Mammary epithelial cell (primary cell): ENCODE measurements at regions of chr5 and their contacts with region 1.

Region 1: GRCh38 chr5:116574367-116575325 is at the start of gene SEMA6A:
- DNase-seq: peak; percentile 95
- H3K4me3 ChIP-seq: peak within 1 kb of the TSS; percentile 41 to 71 (median 53)
- H3K27ac ChIP-seq: peak within 1 kb of the TSS; percentile 35
- H3K4me1 ChIP-seq: peaks cover 32% of the 10 kb centered on the region
- H3K27me3 ChIP-seq: peaks cover 23% of the 10 kb centered on the region
- CTCF ChIP-seq: peak in 1 of 2 donors; percentile 20
- total RNA-seq, gene SEMA6A: 1.2 to 7.7 TPM

Region 2: GRCh38 chr5:116137544-116138378 is 436.9 kb before region 1 on chr5:
- CTCF ChIA-PET with region 1: no interaction called
- dilution Hi-C with region 1: no loop called
- in situ Hi-C with region 1: loop called in 1 of 2 experiments (anchors 25 kb)
- intact Hi-C with region 1: loop called (anchors 5 kb)
- DNase-seq: peak; percentile 27
- H3K4me3 ChIP-seq: no peak overlapping the region
- H3K27ac ChIP-seq: no peak overlapping the region
- H3K4me1 ChIP-seq: no peaks in the 10 kb centered on the region
- H3K27me3 ChIP-seq: no peaks in the 10 kb centered on the region
- CTCF ChIP-seq: peak; percentile 70 to 79

Region 3: DNA sequence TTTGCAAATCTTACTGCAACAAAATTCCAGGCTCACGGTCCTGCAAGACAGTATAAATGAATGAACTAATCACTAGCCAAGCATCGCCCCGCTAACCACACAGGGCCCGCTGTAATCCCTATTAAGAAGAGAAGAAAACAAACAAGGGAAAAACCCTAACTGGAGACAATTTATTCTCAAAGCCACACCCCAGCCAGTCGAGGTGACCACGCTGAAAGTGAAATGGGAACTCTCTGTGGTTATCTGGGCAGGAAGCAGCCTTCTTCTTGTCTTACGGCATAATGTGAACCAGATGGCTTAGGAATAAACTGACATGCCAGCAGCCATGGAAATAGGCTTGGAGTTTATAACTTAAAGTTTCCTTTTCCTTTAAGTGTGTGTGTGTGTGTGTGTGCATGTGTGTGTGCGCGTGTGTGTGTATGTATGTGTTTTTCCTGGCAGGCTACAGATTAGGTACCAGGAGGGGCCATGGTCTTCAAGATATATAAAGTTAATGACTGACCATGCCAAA is 120.2 kb before region 1 on chr5:
- CTCF ChIA-PET with region 1: no interaction called
- dilution Hi-C with region 1: no loop called
- in situ Hi-C with region 1: no loop called
- intact Hi-C with region 1: no loop called
- DNase-seq: peak; percentile 30
- H3K4me3 ChIP-seq: no peak overlapping the region
- H3K27ac ChIP-seq: no peak overlapping the region
- H3K4me1 ChIP-seq: peaks cover 13% of the 10 kb centered on the region
- H3K27me3 ChIP-seq: no peaks in the 10 kb centered on the region
- CTCF ChIP-seq: no peak

Region 4: GRCh38 chr5:116510517-116510916 is 64.1 kb before region 1 on chr5:
- CTCF ChIA-PET with region 1: no interaction called
- dilution Hi-C with region 1: no loop called
- in situ Hi-C with region 1: no loop called
- intact Hi-C with region 1: no loop called
- DNase-seq: no peak
- H3K4me3 ChIP-seq: no peak overlapping the region
- H3K27ac ChIP-seq: no peak overlapping the region
- H3K4me1 ChIP-seq: no peaks in the 10 kb centered on the region
- H3K27me3 ChIP-seq: no peaks in the 10 kb centered on the region
- CTCF ChIP-seq: no peak

Region 5: GRCh38 chr5:116658141-116658749 is 83.6 kb after region 1 on chr5:
- CTCF ChIA-PET with region 1: no interaction called
- dilution Hi-C with region 1: no loop called
- in situ Hi-C with region 1: no loop called
- intact Hi-C with region 1: loop called (anchors 5 kb)
- DNase-seq: peak; percentile 73
- H3K4me3 ChIP-seq: no peak overlapping the region
- H3K27ac ChIP-seq: no peak overlapping the region
- H3K4me1 ChIP-seq: peaks cover 8% of the 10 kb centered on the region
- H3K27me3 ChIP-seq: no peaks in the 10 kb centered on the region
- CTCF ChIP-seq: no peak

Region 6: GRCh38 chr5:116771466-116772151 is 197.0 kb after region 1 on chr5:
- CTCF ChIA-PET with region 1: no interaction called
- dilution Hi-C with region 1: no loop called
- in situ Hi-C with region 1: no loop called
- intact Hi-C with region 1: loop called (anchors 5 kb)
- DNase-seq: peak; percentile 88
- H3K4me3 ChIP-seq: peak overlapping the region in 1 of 3 experiments; percentile 19
- H3K27ac ChIP-seq: peak overlapping the region; percentile 80
- H3K4me1 ChIP-seq: peaks cover 14% of the 10 kb centered on the region
- H3K27me3 ChIP-seq: no peaks in the 10 kb centered on the region
- CTCF ChIP-seq: no peak

Region 7: DNA sequence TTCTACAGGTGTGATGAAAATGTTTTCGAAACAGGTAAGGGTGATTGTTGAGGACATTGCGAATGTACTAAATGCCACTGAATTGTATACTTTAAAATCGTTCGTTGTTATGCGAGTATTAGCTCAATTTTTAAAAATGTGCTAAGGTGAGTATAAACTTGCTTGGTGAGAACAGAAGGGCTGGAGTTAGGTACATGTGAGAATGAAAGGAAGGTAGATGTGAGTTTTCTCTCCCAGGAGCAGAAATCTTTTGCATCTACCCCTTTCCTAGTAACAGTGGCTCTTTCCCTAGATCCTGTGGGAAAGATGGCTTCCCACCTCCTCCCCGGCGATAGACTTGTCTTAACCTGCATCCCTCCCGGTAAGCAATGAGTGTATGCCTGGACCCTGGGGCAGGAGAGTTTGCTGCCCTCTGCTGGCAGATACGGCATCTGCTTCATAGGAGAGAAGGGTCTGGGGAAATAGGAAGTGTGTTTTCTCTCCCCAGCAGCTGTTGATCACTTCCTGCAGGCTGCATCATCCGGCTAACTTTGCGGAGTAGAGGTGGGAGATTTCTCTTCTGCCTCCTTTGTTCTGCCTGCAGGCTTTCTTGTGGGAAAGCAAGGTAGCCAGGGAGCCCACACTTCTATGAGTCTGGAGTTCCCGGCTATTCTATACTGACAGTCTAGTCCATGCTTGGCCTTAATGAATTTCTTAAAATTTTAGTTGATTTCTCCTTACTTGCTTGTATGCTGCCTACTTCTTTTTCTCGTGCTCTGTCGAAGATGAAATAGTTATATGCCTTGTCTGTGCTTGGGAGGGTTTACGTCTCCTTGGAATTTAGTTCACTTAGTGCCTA is 373.3 kb after region 1 on chr5:
- CTCF ChIA-PET with region 1: no interaction called
- dilution Hi-C with region 1: no loop called
- in situ Hi-C with region 1: loop called (anchors 5 to 10 kb)
- intact Hi-C with region 1: loop called (anchors 1 kb)
- DNase-seq: peak; percentile 73
- H3K4me3 ChIP-seq: no peak overlapping the region
- H3K27ac ChIP-seq: no peak overlapping the region
- H3K4me1 ChIP-seq: no peaks in the 10 kb centered on the region
- H3K27me3 ChIP-seq: no peaks in the 10 kb centered on the region
- CTCF ChIP-seq: peak; percentile 80 to 92

Region 8: GRCh38 chr5:116989995-116990394 is 415.3 kb after region 1 on chr5:
- CTCF ChIA-PET with region 1: interaction called, 10 read pairs
- dilution Hi-C with region 1: no loop called
- in situ Hi-C with region 1: no loop called
- intact Hi-C with region 1: no loop called
- DNase-seq: no peak
- H3K4me3 ChIP-seq: no peak overlapping the region
- H3K27ac ChIP-seq: no peak overlapping the region
- H3K4me1 ChIP-seq: no peaks in the 10 kb centered on the region
- H3K27me3 ChIP-seq: no peaks in the 10 kb centered on the region
- CTCF ChIP-seq: no peak